ENCODE measurements at regions of chr13 and their contacts with region 1.

Region 1: DNA sequence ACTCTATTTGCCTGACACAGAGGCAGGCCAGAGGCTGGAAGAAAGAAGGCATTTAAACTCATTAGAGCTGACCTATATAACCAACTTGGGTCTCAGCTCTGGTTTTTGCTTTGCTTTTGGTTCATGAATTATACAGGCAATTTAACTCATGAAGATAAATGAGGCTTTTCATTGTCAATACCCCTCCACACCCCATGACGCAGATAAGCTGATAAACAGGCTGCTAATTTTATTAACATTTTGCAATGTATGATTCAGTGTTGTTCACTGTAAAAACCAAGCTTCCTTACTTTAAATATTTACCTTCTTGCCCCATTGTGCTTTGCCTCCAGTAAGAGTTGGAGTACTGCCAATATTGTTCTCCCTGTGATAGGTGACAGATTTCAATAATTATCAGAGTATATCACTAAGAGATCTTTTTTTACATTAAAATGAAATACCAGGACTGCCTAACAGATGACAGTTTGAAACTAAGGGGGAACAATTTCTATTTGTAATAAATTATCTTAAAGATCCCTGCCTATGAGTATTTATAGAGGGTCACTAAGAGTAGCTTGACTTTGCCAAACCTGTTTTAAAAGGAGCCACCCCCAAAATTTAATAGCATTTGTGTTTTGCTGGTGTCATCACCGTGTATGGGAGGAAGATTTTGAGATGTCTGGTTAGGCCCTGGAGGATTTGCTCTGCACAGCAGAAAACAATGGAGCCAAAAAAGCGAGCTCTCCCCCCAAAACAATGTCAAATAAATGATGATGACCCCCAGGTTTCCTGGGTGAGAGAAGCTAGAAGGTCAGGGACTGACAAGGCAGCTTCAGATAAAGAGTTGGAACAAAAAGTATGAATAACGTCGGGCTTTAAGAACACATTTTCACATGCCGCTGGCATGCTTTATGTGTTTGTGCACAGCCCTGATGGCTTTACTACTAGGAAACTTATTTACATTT is 472.6 kb upstream of the NBEA start:
- DNase-seq: peak; percentile 92
- ATAC-seq: peak; percentile 89
- H3K4me3 ChIP-seq: no peak overlapping the region
- H3K27ac ChIP-seq: peak overlapping the region; percentile 97
- H3K4me1 ChIP-seq: peaks cover 52% of the 10 kb centered on the region
- H3K27me3 ChIP-seq: no peaks in the 10 kb centered on the region
- CTCF ChIP-seq: no peak

Region 2: GRCh38 chr13:34265016-34265692 is 204.3 kb before region 1 on chr13:
- CTCF ChIA-PET with region 1: no interaction called
- POLR2A ChIA-PET with region 1: no interaction called
- intact Hi-C with region 1: loop called (anchors 5 kb)
- DNase-seq: peak; percentile 78
- ATAC-seq: peak; percentile 87
- H3K4me3 ChIP-seq: no peak overlapping the region; the same call in 1 of the 2 replicates
- H3K27ac ChIP-seq: peak overlapping the region; percentile 93
- H3K4me1 ChIP-seq: peaks cover 19% of the 10 kb centered on the region
- H3K27me3 ChIP-seq: no peaks in the 10 kb centered on the region
- CTCF ChIP-seq: no peak

Region 3: GRCh38 chr13:34349091-34349722 is 120.3 kb before region 1 on chr13:
- CTCF ChIA-PET with region 1: no interaction called
- POLR2A ChIA-PET with region 1: no interaction called
- intact Hi-C with region 1: loop called (anchors 5 kb)
- DNase-seq: peak; percentile 92
- ATAC-seq: peak; percentile 73
- H3K4me3 ChIP-seq: no peak overlapping the region
- H3K27ac ChIP-seq: peak overlapping the region; percentile 96
- H3K4me1 ChIP-seq: peaks cover 51% of the 10 kb centered on the region
- H3K27me3 ChIP-seq: no peaks in the 10 kb centered on the region
- CTCF ChIP-seq: no peak

Region 4: DNA sequence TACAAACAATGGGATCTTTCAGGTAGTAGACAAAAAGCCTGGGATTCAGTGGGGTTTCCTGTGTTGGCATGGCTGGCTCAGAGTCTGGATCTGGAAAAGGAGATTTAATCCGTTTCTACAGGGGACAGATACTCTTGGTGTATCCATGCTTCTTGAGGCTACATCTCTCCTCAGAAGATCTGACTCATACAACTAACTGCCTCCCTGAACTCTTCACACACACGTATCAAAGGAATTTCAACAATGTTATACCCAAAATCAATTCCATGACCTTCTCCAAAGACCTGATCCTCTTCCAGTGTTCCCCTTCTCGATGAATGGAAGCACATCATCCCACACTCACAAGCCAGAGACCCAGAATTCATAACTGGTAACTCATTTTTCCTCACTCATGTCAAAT is 37.3 kb after region 1 on chr13:
- CTCF ChIA-PET with region 1: no interaction called
- POLR2A ChIA-PET with region 1: no interaction called
- intact Hi-C with region 1: loop called (anchors 1 kb)
- DNase-seq: peak; percentile 7
- ATAC-seq: 0 out of 2 replicates have a peak, but pooled peaks have one; percentile 24
- H3K4me3 ChIP-seq: no peak overlapping the region
- H3K27ac ChIP-seq: no peak overlapping the region
- H3K4me1 ChIP-seq: peaks cover 4% of the 10 kb centered on the region; the same call in 1 of the 2 replicates
- H3K27me3 ChIP-seq: no peaks in the 10 kb centered on the region
- CTCF ChIP-seq: no peak